Activated CD4-positive, alpha-beta T cell treated with anti-CD3 and anti-CD28 coated beads for 36 hours (primary cell): ENCODE measurements at regions of chr1 and their contacts with region 1.

Region 1: DNA sequence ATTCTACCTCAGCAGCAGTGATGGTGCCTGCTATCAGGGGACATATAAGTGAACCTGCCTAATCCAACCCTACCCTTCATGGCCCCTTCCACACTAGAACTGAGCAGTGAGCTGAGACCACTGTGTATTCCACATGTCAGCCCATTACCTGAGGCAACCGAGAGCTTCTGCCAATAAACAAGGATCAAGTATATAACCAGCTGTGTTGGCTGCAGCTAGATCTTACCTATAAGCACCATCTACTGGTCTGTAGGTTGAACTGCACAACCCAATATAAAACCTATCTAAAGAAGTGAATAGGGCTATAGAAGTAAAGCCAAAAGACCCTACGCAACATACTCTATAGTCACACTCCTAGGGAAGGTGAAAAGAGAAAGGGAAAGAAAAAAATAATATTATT is 376.9 kb downstream of the HHIPL2 start:
- DNase-seq: no peak
- ATAC-seq: no peak
- H3K4me3 Mint-ChIP-seq: no peak overlapping the region
- H3K27ac Mint-ChIP-seq: no peak overlapping the region
- H3K4me1 Mint-ChIP-seq: no peaks in the 10 kb centered on the region
- H3K27me3 Mint-ChIP-seq: no peaks in the 10 kb centered on the region

Region 2: GRCh38 chr1:221478050-221478949 is 692.7 kb before region 1 on chr1:
- CTCF ChIA-PET with region 1: no interaction called
- POLR2A ChIA-PET with region 1: no interaction called
- intact Hi-C with region 1: loop called in 1 of 2 experiments (anchors 1 kb)
- DNase-seq: peak; percentile 78
- ATAC-seq: peak; percentile 99
- H3K4me3 Mint-ChIP-seq: no peak overlapping the region
- H3K27ac Mint-ChIP-seq: no peak overlapping the region
- H3K4me1 Mint-ChIP-seq: no peaks in the 10 kb centered on the region
- H3K27me3 Mint-ChIP-seq: peaks cover 7% of the 10 kb centered on the region

Region 3: DNA sequence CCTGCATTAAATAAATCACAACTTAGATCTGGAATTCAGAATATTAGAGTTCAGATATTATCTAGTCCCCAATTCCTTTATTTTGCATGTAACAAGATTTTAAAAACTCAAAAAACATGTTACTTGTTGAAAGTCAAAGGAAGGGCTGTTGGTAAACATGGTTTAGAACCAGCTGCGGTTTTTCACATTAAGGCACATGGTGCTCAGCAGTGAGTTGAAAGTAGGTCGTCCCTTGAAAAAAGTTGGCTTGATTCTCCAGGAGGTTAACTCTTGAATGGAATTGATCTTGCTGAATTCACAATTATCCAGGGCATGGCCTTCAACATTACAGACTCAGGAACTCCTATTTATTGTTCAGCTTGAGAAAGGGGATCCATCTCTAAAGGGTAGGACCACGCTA is 152.0 kb before region 1 on chr1:
- CTCF ChIA-PET with region 1: no interaction called
- POLR2A ChIA-PET with region 1: no interaction called
- intact Hi-C with region 1: no loop called
- DNase-seq: no peak
- ATAC-seq: no peak
- H3K4me3 Mint-ChIP-seq: no peak overlapping the region
- H3K27ac Mint-ChIP-seq: no peak overlapping the region
- H3K4me1 Mint-ChIP-seq: no peaks in the 10 kb centered on the region
- H3K27me3 Mint-ChIP-seq: peaks cover 2% of the 10 kb centered on the region